CD4-positive, alpha-beta T cell (primary cell): ENCODE measurements at regions of chr10 and their contacts with region 1.

Region 1: DNA sequence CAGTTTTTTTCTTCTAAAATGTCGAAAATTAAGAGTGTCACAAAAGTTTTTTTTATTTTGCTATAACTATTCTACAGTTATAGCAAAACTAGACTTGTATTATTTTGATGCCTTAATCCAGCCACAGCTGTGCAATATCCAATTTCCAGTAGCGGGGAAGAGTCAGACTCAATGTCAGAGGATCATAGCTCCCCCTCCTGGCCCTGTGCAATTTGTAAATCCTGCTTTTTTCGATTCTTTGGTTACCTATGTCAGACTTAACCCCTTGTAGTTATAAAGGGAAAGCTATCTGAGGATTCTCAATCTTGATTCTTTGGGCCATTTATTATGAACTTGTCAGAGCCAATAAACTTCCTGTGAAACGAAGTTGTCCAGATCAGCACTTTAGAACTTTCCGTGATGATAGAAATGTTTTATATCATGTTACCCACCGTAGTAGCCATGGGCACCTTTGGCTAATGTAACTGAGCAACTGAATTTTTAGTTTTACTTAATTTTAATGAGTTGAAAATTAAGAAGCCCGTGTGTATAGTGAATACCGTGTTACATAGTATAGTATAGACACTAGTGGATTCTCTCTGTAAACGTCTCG is 87.7 kb upstream of the PRKCQ start:
- DNase-seq: peak in 11 of 14 experiments; percentile 7 to 61 (median 23)
- ATAC-seq: no peak
- H3K4me3 ChIP-seq: no peak overlapping the region
- H3K4me3 Mint-ChIP-seq: no peak overlapping the region
- H3K27ac ChIP-seq: no peak overlapping the region
- H3K27ac Mint-ChIP-seq: no peak overlapping the region
- H3K4me1 ChIP-seq: peaks cover 3% of the 10 kb centered on the region
- H3K4me1 Mint-ChIP-seq: peaks cover 31% of the 10 kb centered on the region
- H3K27me3 ChIP-seq: no peaks in the 10 kb centered on the region
- H3K27me3 Mint-ChIP-seq: no peaks in the 10 kb centered on the region
- CTCF ChIP-seq: peak; percentile 78

Region 2: GRCh38 chr10:6108603-6109443 is 559.0 kb before region 1 on chr10:
- CTCF ChIA-PET with region 1: no interaction called
- POLR2A ChIA-PET with region 1: no interaction called
- intact Hi-C with region 1: loop called (anchors 5 to 10 kb)
- DNase-seq: peak in 6 of 14 experiments; percentile 17 to 83 (median 59)
- ATAC-seq: peak; percentile 86
- H3K4me3 ChIP-seq: peak overlapping the region; percentile 9
- H3K4me3 Mint-ChIP-seq: peak overlapping the region; percentile 57
- H3K27ac ChIP-seq: no peak overlapping the region
- H3K27ac Mint-ChIP-seq: peak overlapping the region; percentile 43
- H3K4me1 ChIP-seq: peaks cover 19% of the 10 kb centered on the region
- H3K4me1 Mint-ChIP-seq: peaks cover 35% of the 10 kb centered on the region
- H3K27me3 ChIP-seq: no peaks in the 10 kb centered on the region
- H3K27me3 Mint-ChIP-seq: no peaks in the 10 kb centered on the region
- CTCF ChIP-seq: peak; percentile 91

Region 3: GRCh38 chr10:6464862-6465430 is 202.8 kb before region 1 on chr10:
- CTCF ChIA-PET with region 1: no interaction called
- POLR2A ChIA-PET with region 1: no interaction called
- intact Hi-C with region 1: loop called in 1 of 2 experiments (anchors 5 kb)
- DNase-seq: no peak
- ATAC-seq: no peak
- H3K4me3 ChIP-seq: no peak overlapping the region
- H3K4me3 Mint-ChIP-seq: no peak overlapping the region
- H3K27ac ChIP-seq: no peak overlapping the region
- H3K27ac Mint-ChIP-seq: peak overlapping the region; percentile 24
- H3K4me1 ChIP-seq: no peaks in the 10 kb centered on the region
- H3K4me1 Mint-ChIP-seq: peaks cover 28% of the 10 kb centered on the region
- H3K27me3 ChIP-seq: no peaks in the 10 kb centered on the region
- H3K27me3 Mint-ChIP-seq: no peaks in the 10 kb centered on the region
- CTCF ChIP-seq: no peak

Region 4: DNA sequence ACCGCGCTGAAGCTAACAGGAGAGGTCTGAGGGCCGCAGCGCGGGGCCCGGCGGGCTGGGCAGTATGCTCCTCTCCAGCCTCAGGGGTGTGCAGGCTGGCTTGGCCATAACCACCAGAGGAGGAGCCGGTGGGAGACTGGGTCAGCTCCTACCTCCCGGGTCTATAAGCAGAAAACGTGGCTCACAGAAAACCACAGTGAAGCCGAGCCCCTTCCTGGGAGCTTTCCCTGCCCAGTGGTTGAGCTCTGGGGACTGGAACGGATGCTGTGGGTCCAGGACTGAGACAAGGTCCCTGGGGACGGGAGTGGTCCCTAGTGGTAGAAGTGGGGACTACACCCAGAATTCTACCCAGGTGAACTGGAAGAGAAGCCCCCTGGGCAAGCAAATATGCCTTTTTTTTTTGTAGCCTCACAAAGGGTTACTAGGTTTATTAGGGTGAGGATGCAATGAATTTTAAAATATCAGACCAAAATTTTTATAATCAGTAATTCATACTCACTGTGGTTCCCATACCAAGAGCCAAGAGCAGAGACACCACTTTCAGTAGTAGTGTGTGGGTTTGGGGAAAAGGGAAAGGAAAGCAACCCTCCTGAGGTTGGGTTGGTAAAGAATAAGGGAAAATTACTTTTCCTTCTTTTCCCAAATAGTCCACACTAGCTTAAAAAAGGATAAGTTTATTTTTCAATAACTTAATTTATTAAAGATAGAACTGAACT is 19.8 kb before region 1 on chr10:
- CTCF ChIA-PET with region 1: interaction called, 4 read pairs
- POLR2A ChIA-PET with region 1: no interaction called
- intact Hi-C with region 1: loop called in 1 of 2 experiments (anchors 1 kb)
- DNase-seq: peak; percentile 41 to 82 (median 60)
- ATAC-seq: peak; percentile 97
- H3K4me3 ChIP-seq: no peak overlapping the region
- H3K4me3 Mint-ChIP-seq: no peak overlapping the region
- H3K27ac ChIP-seq: no peak overlapping the region
- H3K27ac Mint-ChIP-seq: no peak overlapping the region
- H3K4me1 ChIP-seq: peaks cover 16% of the 10 kb centered on the region
- H3K4me1 Mint-ChIP-seq: peaks cover 17% of the 10 kb centered on the region
- H3K27me3 ChIP-seq: no peaks in the 10 kb centered on the region
- H3K27me3 Mint-ChIP-seq: no peaks in the 10 kb centered on the region
- CTCF ChIP-seq: peak; percentile 93

Region 5: GRCh38 chr10:7417103-7417623 is 749.4 kb after region 1 on chr10:
- CTCF ChIA-PET with region 1: no interaction called
- POLR2A ChIA-PET with region 1: no interaction called
- intact Hi-C with region 1: loop called (anchors 1 to 5 kb)
- DNase-seq: peak in 3 of 14 experiments; percentile 65 to 78 (median 74)
- ATAC-seq: peak; percentile 51
- H3K4me3 ChIP-seq: no peak overlapping the region
- H3K4me3 Mint-ChIP-seq: peak overlapping the region; percentile 54
- H3K27ac ChIP-seq: no peak overlapping the region
- H3K27ac Mint-ChIP-seq: peak overlapping the region; percentile 57
- H3K4me1 ChIP-seq: peaks cover 9% of the 10 kb centered on the region
- H3K4me1 Mint-ChIP-seq: peaks cover 18% of the 10 kb centered on the region
- H3K27me3 ChIP-seq: peaks cover 0 to 5% of the 10 kb centered on the region in 2 experiments
- H3K27me3 Mint-ChIP-seq: no peaks in the 10 kb centered on the region
- CTCF ChIP-seq: peak; percentile 77